Right ventricle myocardium inferior (tissue), 1 donor: ENCODE measurements at regions of chr2 and their contacts with region 1.

Region 1: GRCh38 chr2:24490674-24491625 is at the start of gene NCOA1:
- DNase-seq: peak; percentile 96
- ATAC-seq: peak; percentile 92
- total RNA-seq, gene NCOA1: 31.0 TPM

Region 2: GRCh38 chr2:24435391-24436316 is 55.3 kb before region 1 on chr2:
- intact Hi-C with region 1: loop called (anchors 2 kb)
- DNase-seq: peak; percentile 76
- ATAC-seq: peak; percentile 84

Region 3: GRCh38 chr2:24721470-24721869 is 230.5 kb after region 1 on chr2:
- intact Hi-C with region 1: loop called (anchors 5 kb)
- DNase-seq: peak; percentile 73
- ATAC-seq: peak; percentile 92

Region 4: GRCh38 chr2:24792874-24793760 is 302.2 kb after region 1 on chr2 and contains the starts of genes CENPO and PTRHD1:
- intact Hi-C with region 1: loop called (anchors 1 kb)
- DNase-seq: peak; percentile 99
- ATAC-seq: peak; percentile 99
- total RNA-seq, gene CENPO: 3.0 TPM
- total RNA-seq, gene PTRHD1: 33.4 TPM